HCT116 (cell line): ENCODE measurements at regions of chr4 and their contacts with region 1.

Region 1: GRCh38 chr4:102826890-102827673 is at the start of gene UBE2D3:
- DNase-seq: peak; percentile 92
- ATAC-seq: peak; percentile 58
- H3K4me3 ChIP-seq: peak within 1 kb of the TSS; percentile 76 to 83
- H3K27ac ChIP-seq: peak within 1 kb of the TSS; percentile 90
- H3K4me1 ChIP-seq: peaks cover 9 to 27% of the 10 kb centered on the region in 2 experiments
- H3K27me3 ChIP-seq: no peaks in the 10 kb centered on the region
- CTCF ChIP-seq: no peak; a peak in 1 of 6 replicates
- POLR2A ChIP-seq: peak; percentile 67
- RAD21 ChIP-seq: no peak
- total RNA-seq, gene UBE2D3: 302 TPM

Region 2: DNA sequence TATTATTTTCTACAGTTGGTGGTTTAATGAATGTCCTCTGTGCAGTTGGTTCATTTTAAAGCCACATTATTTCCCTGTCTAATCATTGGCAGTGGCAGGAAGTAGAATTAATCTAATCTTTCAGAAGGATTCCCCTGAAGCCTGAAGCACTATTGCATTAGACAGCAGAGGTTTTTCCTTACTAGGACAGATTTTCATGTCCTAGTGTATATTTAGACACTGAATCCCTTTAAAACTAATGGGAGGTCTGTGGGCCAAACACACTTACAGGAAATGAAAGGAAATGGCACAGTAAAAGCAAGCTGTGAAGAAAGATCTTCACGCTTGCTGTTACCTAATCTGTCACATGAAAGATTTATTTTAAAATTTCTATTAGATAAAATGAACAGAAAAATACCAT is 647.0 kb before region 1 on chr4:
- CTCF ChIA-PET with region 1: no interaction called
- POLR2A ChIA-PET with region 1: no interaction called
- RAD21 ChIA-PET with region 1: no interaction called
- intact Hi-C with region 1: no loop called
- DNase-seq: no peak
- ATAC-seq: no peak
- H3K4me3 ChIP-seq: no peak overlapping the region
- H3K27ac ChIP-seq: no peak overlapping the region
- H3K4me1 ChIP-seq: no peaks in the 10 kb centered on the region
- H3K27me3 ChIP-seq: no peaks in the 10 kb centered on the region
- CTCF ChIP-seq: no peak
- POLR2A ChIP-seq: no peak
- RAD21 ChIP-seq: no peak

Region 3: GRCh38 chr4:102308031-102308799 is 518.9 kb before region 1 on chr4:
- CTCF ChIA-PET with region 1: no interaction called
- POLR2A ChIA-PET with region 1: no interaction called
- RAD21 ChIA-PET with region 1: no interaction called
- intact Hi-C with region 1: no loop called
- DNase-seq: no peak
- ATAC-seq: no peak
- H3K4me3 ChIP-seq: no peak overlapping the region
- H3K27ac ChIP-seq: no peak overlapping the region
- H3K4me1 ChIP-seq: peaks cover 0 to 3% of the 10 kb centered on the region in 2 experiments; a peak in 1 of 4 replicates
- H3K27me3 ChIP-seq: no peaks in the 10 kb centered on the region
- CTCF ChIP-seq: no peak
- POLR2A ChIP-seq: no peak
- RAD21 ChIP-seq: no peak

Region 4: GRCh38 chr4:102449751-102450352 is 377.2 kb before region 1 on chr4:
- CTCF ChIA-PET with region 1: interaction called, 3 read pairs
- POLR2A ChIA-PET with region 1: no interaction called
- RAD21 ChIA-PET with region 1: no interaction called
- intact Hi-C with region 1: loop called (anchors 5 kb)
- DNase-seq: peak; percentile 42
- ATAC-seq: peak; percentile 82
- H3K4me3 ChIP-seq: no peak overlapping the region
- H3K27ac ChIP-seq: no peak overlapping the region
- H3K4me1 ChIP-seq: no peaks in the 10 kb centered on the region
- H3K27me3 ChIP-seq: no peaks in the 10 kb centered on the region
- CTCF ChIP-seq: peak; percentile 54 to 82 (median 80)
- POLR2A ChIP-seq: no peak
- RAD21 ChIP-seq: peak; percentile 88

Region 5: GRCh38 chr4:102751941-102752340 is 75.1 kb before region 1 on chr4:
- CTCF ChIA-PET with region 1: no interaction called
- POLR2A ChIA-PET with region 1: no interaction called
- RAD21 ChIA-PET with region 1: no interaction called
- intact Hi-C with region 1: no loop called
- DNase-seq: no peak
- ATAC-seq: no peak
- H3K4me3 ChIP-seq: no peak overlapping the region
- H3K27ac ChIP-seq: no peak overlapping the region
- H3K4me1 ChIP-seq: no peaks in the 10 kb centered on the region
- H3K27me3 ChIP-seq: no peaks in the 10 kb centered on the region
- CTCF ChIP-seq: no peak
- POLR2A ChIP-seq: no peak
- RAD21 ChIP-seq: no peak

Region 6: GRCh38 chr4:102815981-102816380 is 11.1 kb before region 1 on chr4:
- CTCF ChIA-PET with region 1: no interaction called
- POLR2A ChIA-PET with region 1: interaction called, 24 read pairs
- RAD21 ChIA-PET with region 1: no interaction called
- intact Hi-C with region 1: no loop called
- DNase-seq: no peak
- ATAC-seq: peak; percentile 52; the same call in 1 of the 2 replicates
- H3K4me3 ChIP-seq: no peak overlapping the region
- H3K27ac ChIP-seq: no peak overlapping the region
- H3K4me1 ChIP-seq: peaks cover 0 to 41% of the 10 kb centered on the region in 2 experiments; a peak in 3 of 4 replicates
- H3K27me3 ChIP-seq: no peaks in the 10 kb centered on the region
- CTCF ChIP-seq: no peak
- POLR2A ChIP-seq: no peak
- RAD21 ChIP-seq: no peak

Region 7: DNA sequence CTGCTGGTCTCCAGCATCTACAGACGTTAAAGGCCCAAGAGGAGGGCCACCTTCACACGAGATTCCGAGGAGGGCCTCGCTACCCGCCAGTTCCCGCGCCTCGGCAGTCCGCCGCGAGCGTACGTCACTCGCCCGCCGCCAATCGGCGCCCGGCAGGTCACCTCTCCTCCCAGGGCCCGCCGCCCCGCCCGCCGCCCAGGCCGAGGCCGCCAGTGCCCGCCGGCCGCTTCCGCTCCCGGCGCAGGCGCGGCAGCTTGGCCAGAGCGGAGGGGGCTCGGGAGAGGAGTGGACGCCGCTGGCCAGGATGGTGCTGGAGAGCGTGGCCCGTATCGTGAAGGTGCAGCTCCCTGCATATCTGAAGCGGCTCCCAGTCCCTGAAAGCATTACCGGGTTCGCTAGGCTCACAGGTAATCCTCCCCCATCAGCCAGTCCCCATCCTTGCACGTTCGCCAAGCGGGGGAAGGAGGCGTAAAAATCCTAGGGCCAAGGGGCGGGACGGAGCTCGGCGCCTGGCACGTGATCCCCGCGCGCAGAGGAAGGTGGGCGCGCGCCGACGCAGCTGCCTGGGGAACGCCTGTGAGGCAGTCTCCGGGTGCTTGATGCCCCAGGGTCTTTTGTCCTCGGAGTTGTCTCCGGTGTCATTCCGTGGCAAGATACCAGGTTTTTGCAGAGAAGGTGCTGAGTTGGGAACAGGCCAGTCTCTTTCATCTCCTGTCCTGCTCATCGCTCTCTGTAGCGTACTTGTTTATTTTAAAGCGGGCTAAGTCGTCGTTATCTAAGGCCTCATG is 41.9 kb after region 1 on chr4 and contains the start of gene CISD2:
- CTCF ChIA-PET with region 1: no interaction called
- POLR2A ChIA-PET with region 1: interaction called, 49 read pairs
- RAD21 ChIA-PET with region 1: interaction called, 3 to 5 read pairs
- intact Hi-C with region 1: loop called (anchors 1 kb)
- DNase-seq: peak; percentile 82
- ATAC-seq: peak; percentile 92
- H3K4me3 ChIP-seq: peak within 1 kb of the TSS; percentile 61 to 69
- H3K27ac ChIP-seq: peak within 1 kb of the TSS; percentile 87
- H3K4me1 ChIP-seq: peaks cover 5 to 28% of the 10 kb centered on the region in 2 experiments; a peak in 3 of 4 replicates
- H3K27me3 ChIP-seq: no peaks in the 10 kb centered on the region
- CTCF ChIP-seq: no peak
- POLR2A ChIP-seq: peak; percentile 96
- RAD21 ChIP-seq: no peak
- total RNA-seq, gene CISD2: 38.9 TPM

Region 8: GRCh38 chr4:103099691-103100392 is 272.8 kb after region 1 on chr4 and contains the start of gene BDH2:
- CTCF ChIA-PET with region 1: no interaction called
- POLR2A ChIA-PET with region 1: interaction called, 5 read pairs
- RAD21 ChIA-PET with region 1: interaction called in 1 of 2 experiments, 3 read pairs
- intact Hi-C with region 1: loop called (anchors 10 kb)
- DNase-seq: peak; percentile 79
- ATAC-seq: peak; percentile 94
- H3K4me3 ChIP-seq: peak within 1 kb of the TSS; percentile 11 to 42; a peak in 3 of 4 replicates
- H3K27ac ChIP-seq: no peak within 1 kb of the TSS
- H3K4me1 ChIP-seq: peaks cover 0 to 10% of the 10 kb centered on the region in 2 experiments; a peak in 2 of 4 replicates
- H3K27me3 ChIP-seq: no peaks in the 10 kb centered on the region
- CTCF ChIP-seq: peak; percentile 50 to 74 (median 72)
- POLR2A ChIP-seq: peak; percentile 51
- RAD21 ChIP-seq: peak; percentile 89
- total RNA-seq, gene BDH2: 5.0 TPM